ENCODE measurements at regions of chr10 and their contacts with region 1.

Region 1: GRCh38 chr10:30059209-30060107 is at the start of gene JCAD:
- DNase-seq: peak; percentile 80 to 85
- ATAC-seq: peak; percentile 76 to 94 (median 84)
- H3K4me3 ChIP-seq: peak within 1 kb of the TSS; percentile 68 to 90 (median 82)
- H3K27ac ChIP-seq: peak within 1 kb of the TSS; percentile 90 to 99 (median 95)
- H3K4me1 ChIP-seq: peaks cover 0 to 69% (median 40%) of the 10 kb centered on the region in 9 donors
- H3K27me3 ChIP-seq: peaks cover 0 to 61% (median 7%) of the 10 kb centered on the region in 7 donors
- CTCF ChIP-seq: no peak
- total RNA-seq, gene JCAD: 16.5 to 39.8 (median 21.4) TPM

Region 2: GRCh38 chr10:29969255-29970011 is 90.0 kb before region 1 on chr10:
- intact Hi-C with region 1: no loop called
- DNase-seq: no peak
- ATAC-seq: peak in 1 of 8 donors; percentile 30
- H3K4me3 ChIP-seq: no peak overlapping the region
- H3K27ac ChIP-seq: no peak overlapping the region
- H3K4me1 ChIP-seq: peaks cover 0 to 8% (median 0%) of the 10 kb centered on the region in 9 donors
- H3K27me3 ChIP-seq: no peaks in the 10 kb centered on the region
- CTCF ChIP-seq: no peak

Region 3: DNA sequence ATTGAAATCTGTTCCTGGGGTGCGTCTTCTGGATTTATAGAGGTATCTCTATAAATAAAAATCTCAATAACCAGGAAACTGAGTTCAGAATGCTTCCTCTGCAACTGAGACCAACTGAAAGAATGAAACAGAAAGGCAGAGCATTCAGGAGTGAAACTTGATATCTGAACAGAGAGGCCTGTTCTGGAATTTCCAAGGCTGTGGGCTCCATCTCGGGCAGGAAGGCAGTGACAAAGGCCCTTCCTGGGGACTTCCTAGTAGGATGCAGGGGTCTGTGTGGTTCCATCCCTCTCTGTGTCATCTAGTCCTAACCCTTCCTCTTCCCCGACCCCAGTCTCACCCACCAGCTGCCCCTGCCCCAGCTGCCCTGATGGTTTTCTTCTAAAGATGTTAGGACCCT is 52.1 kb before region 1 on chr10:
- intact Hi-C with region 1: loop called in 1 of 10 experiments (anchors 5 kb)
- DNase-seq: no peak
- ATAC-seq: peak in 2 of 8 donors; percentile 46
- H3K4me3 ChIP-seq: no peak overlapping the region
- H3K27ac ChIP-seq: peak overlapping the region in 2 of 10 donors; percentile 35 to 64
- H3K4me1 ChIP-seq: peaks cover 0 to 26% (median 6%) of the 10 kb centered on the region in 9 donors
- H3K27me3 ChIP-seq: no peaks in the 10 kb centered on the region
- CTCF ChIP-seq: no peak

Region 4: DNA sequence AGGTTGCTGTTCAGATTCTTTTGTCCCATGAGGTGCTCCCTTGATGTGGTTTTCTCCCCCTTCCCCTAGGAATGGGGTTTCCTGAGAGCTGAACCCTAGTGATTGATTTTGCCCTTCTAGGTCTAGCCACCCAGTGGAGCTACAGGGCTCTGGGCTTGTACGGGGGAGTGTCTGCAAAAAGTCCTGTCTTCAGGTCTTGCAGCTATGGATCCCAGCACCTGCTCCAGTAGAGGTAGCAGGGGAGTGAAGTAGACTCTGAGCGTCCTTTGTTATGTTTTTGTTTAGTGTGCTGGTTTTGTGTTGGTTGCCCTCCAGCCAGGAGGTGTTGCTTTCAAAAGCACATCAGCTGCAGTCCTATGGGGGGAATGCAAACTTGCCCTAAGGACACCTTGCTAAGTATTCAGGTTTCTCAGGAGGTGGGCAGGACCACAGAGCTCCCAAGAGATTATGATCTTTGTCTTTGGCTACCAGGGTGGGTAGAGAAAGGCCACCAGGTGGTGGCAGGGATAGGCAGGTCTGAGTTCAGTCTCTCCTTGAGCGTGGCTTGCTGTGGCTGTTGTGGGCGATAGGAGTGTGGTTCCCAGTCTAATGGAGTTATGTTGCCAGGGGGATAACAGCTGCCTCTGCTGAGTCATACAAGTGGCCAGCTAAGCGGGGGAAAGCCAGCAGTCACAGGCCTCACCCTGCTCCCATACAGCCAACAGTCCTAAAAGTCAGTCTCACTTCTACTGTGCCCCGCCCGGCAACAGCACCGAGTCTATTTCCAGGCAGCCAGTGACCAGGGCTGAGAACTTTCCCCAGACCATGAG is 92.3 kb after region 1 on chr10:
- intact Hi-C with region 1: loop called in 1 of 10 experiments (anchors 10 kb)
- DNase-seq: peak; percentile 14 to 16
- ATAC-seq: peak in 6 of 8 donors; percentile 57 to 88 (median 66)
- H3K4me3 ChIP-seq: no peak overlapping the region
- H3K27ac ChIP-seq: no peak overlapping the region
- H3K4me1 ChIP-seq: peaks cover 0 to 13% (median 3%) of the 10 kb centered on the region in 9 donors
- H3K27me3 ChIP-seq: no peaks in the 10 kb centered on the region
- CTCF ChIP-seq: no peak